Dendritic cell treated with granulocyte-macrophage colony-stimulating factor and Interleukin-4, amounts not matched to agents 40 ng/mL and 50 ng/mL, for 4 days (primary cell): ENCODE measurements at regions of chr12 and their contacts with region 1.

Region 1: DNA sequence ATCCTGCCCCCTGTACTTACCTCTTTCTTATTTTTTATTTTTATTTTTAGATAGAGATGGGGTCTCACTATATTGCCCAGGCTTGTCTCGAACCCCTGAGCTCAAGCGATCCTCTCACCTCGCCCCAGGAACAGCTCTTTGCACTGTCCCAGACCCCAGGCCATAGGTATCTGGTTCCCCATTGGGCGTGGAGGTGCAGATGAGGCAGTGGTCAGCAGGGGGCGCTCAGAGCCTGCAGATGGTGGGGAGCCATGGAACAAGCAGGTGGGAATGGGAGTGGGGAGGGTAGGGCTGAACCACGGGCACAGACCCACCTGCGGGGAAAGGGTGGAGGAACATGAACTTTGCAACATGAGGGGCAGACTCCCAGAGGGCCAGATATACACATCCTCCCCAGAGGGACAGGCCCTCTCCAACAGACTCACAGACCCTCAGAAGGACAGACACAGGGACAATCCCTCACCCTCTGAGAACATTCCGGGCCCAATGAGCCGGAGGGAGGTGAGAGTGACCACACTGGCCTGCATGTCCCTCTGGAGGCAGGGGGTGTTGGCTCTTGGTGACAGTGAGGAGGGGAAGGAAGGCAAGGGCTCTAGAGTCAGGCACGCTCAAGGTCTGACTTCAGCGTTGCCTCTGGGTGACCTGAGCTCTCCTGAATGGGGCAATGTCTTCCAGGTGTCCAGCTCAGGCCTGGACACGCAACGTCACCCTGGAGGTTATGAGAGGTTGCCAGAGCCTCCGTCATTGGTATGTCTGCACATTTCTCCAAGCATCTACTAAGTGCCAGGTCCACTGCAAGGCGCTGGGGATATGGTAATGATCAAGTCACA is 34.9 kb downstream of the KRT80 start:
- H3K4me3 Mint-ChIP-seq: no peak overlapping the region
- H3K27ac Mint-ChIP-seq: no peak overlapping the region
- H3K4me1 Mint-ChIP-seq: peaks cover 2% of the 10 kb centered on the region
- H3K27me3 Mint-ChIP-seq: peaks cover 15% of the 10 kb centered on the region

Region 2: GRCh38 chr12:52327052-52327829 is 170.3 kb after region 1 on chr12:
- intact Hi-C with region 1: loop called (anchors 1 kb)
- H3K4me3 Mint-ChIP-seq: no peak overlapping the region
- H3K27ac Mint-ChIP-seq: no peak overlapping the region
- H3K4me1 Mint-ChIP-seq: peaks cover 5% of the 10 kb centered on the region
- H3K27me3 Mint-ChIP-seq: peaks cover 46% of the 10 kb centered on the region

Region 3: GRCh38 chr12:52879394-52880351 is 722.7 kb after region 1 on chr12:
- intact Hi-C with region 1: loop called (anchors 10 kb)
- H3K4me3 Mint-ChIP-seq: peak overlapping the region; percentile 67
- H3K27ac Mint-ChIP-seq: peak overlapping the region; percentile 67
- H3K4me1 Mint-ChIP-seq: peaks cover 31% of the 10 kb centered on the region
- H3K27me3 Mint-ChIP-seq: peaks cover 22% of the 10 kb centered on the region